Activated CD4-positive, alpha-beta memory T cell treated with anti-CD3 and anti-CD28 coated beads for 36 hours (primary cell): ENCODE measurements at regions of chr1 and their contacts with region 1.

Region 1: DNA sequence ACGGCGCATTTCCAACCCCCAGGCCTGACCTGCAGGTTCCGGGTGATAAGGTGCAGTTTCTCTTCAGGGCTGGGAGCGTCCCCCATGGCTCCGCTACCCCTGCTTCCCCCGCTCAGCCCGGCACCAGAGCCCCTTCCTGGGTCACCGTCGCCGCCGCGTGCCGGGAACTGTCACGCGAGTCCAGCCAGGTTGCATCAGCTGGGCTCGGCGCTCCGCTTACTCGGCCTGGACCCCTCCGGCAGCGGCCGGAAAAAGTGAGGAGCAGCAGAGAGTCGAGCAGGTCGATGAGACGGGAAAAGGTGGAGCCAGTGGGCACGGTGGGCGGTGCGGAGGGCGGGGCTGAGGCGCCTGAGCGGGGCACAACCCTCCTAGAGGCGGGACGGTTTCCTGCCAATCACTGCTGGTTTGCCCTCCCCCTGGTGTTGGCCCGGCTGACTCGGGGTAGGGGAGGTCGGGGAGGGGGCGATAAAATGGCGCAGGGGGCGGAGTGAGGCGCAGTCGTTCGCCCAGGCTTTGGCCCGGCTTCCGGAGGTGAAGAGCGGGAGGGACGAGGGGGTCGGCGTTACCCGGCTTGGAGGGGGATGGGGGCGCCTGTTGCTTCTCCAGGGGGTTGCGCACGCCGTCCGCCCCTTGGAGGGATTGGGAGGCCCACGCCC is at the starts of genes S100PBP and YARS1:
- DNase-seq: peak; percentile 100
- H3K4me3 Mint-ChIP-seq: peak within 1 kb of the TSS; percentile 99
- H3K27ac Mint-ChIP-seq: peak within 1 kb of the TSS; percentile 94
- H3K4me1 Mint-ChIP-seq: peaks cover 50% of the 10 kb centered on the region
- H3K27me3 Mint-ChIP-seq: no peaks in the 10 kb centered on the region
- total RNA-seq, gene S100PBP: 30.4 to 32.7 TPM
- total RNA-seq, gene YARS1: 208 to 213 TPM

Region 2: GRCh38 chr1:32684167-32684811 is 133.0 kb before region 1 on chr1:
- CTCF ChIA-PET with region 1: no interaction called
- POLR2A ChIA-PET with region 1: no interaction called
- intact Hi-C with region 1: no loop called
- DNase-seq: no peak
- H3K4me3 Mint-ChIP-seq: no peak overlapping the region
- H3K27ac Mint-ChIP-seq: peak overlapping the region; percentile 61
- H3K4me1 Mint-ChIP-seq: peaks cover 14% of the 10 kb centered on the region
- H3K27me3 Mint-ChIP-seq: no peaks in the 10 kb centered on the region

Region 3: GRCh38 chr1:32801096-32801715 is 16.1 kb before region 1 on chr1:
- CTCF ChIA-PET with region 1: no interaction called
- POLR2A ChIA-PET with region 1: interaction called, 5 read pairs
- intact Hi-C with region 1: loop called (anchors 1 kb)
- DNase-seq: peak; percentile 58
- H3K4me3 Mint-ChIP-seq: peak overlapping the region; percentile 13
- H3K27ac Mint-ChIP-seq: peak overlapping the region; percentile 74
- H3K4me1 Mint-ChIP-seq: peaks cover 56% of the 10 kb centered on the region
- H3K27me3 Mint-ChIP-seq: no peaks in the 10 kb centered on the region

Region 4: DNA sequence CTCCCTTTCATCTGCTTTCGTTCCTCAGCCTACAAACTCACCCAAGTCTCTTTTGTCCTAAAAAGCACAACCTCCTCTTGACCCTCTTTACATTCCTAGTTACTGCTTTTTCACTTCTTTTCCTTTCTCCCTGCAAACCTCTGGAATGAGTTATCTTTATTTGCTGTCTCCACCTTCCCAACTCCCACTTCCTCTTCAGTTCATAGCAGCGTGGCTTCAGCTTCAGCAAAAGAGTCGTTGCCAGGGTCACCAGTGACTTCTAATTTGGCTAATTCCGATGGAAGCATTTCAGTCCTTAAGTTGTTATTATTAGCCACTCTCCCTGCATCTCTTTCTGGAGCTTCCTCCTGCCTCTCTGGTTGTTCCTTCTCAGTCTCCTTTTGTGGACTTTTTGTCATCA is 90.2 kb after region 1 on chr1:
- CTCF ChIA-PET with region 1: no interaction called
- POLR2A ChIA-PET with region 1: no interaction called
- intact Hi-C with region 1: no loop called
- DNase-seq: no peak
- H3K4me3 Mint-ChIP-seq: no peak overlapping the region
- H3K27ac Mint-ChIP-seq: no peak overlapping the region
- H3K4me1 Mint-ChIP-seq: no peaks in the 10 kb centered on the region
- H3K27me3 Mint-ChIP-seq: peaks cover 7% of the 10 kb centered on the region

Region 5: GRCh38 chr1:32939655-32940371 is 122.5 kb after region 1 on chr1:
- CTCF ChIA-PET with region 1: no interaction called
- POLR2A ChIA-PET with region 1: no interaction called
- intact Hi-C with region 1: no loop called
- DNase-seq: peak; percentile 65
- H3K4me3 Mint-ChIP-seq: no peak overlapping the region
- H3K27ac Mint-ChIP-seq: peak overlapping the region; percentile 72
- H3K4me1 Mint-ChIP-seq: peaks cover 43% of the 10 kb centered on the region
- H3K27me3 Mint-ChIP-seq: no peaks in the 10 kb centered on the region

Region 6: DNA sequence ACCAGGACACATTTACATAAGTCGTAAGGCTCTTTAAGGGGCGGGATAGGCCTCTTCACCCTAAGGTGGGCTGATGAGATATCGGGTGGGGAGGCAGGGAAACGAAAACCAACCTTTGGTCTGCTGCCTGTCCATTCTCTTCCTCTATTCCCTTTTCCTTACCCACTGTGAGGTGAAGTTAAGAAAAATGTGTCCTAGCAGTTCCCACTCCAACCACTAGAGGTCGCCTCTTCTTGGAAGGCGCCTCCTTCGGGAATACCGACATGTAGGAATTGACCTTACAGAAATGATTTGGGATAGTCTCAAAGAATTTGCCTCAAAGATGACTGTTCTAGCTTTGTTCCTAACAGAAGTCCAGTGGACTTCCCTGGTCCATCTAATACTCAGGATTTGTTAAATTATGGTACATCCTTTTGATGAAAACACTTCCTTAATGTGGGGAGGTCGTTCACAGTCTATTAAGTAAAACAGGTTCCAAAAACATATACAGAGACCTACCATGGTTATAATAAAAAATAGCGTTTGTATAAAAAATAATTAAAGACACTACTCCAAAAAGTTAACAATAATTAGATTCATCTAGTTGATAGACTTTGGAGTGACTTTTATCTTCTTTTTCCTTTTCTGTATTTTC is 277.8 kb after region 1 on chr1:
- CTCF ChIA-PET with region 1: no interaction called
- POLR2A ChIA-PET with region 1: no interaction called
- intact Hi-C with region 1: no loop called
- DNase-seq: peak; percentile 28
- H3K4me3 Mint-ChIP-seq: no peak overlapping the region
- H3K27ac Mint-ChIP-seq: no peak overlapping the region
- H3K4me1 Mint-ChIP-seq: peaks cover 28% of the 10 kb centered on the region
- H3K27me3 Mint-ChIP-seq: no peaks in the 10 kb centered on the region